BJ (cell line): ENCODE measurements at regions of chr7 and their contacts with region 1.

Region 1: DNA sequence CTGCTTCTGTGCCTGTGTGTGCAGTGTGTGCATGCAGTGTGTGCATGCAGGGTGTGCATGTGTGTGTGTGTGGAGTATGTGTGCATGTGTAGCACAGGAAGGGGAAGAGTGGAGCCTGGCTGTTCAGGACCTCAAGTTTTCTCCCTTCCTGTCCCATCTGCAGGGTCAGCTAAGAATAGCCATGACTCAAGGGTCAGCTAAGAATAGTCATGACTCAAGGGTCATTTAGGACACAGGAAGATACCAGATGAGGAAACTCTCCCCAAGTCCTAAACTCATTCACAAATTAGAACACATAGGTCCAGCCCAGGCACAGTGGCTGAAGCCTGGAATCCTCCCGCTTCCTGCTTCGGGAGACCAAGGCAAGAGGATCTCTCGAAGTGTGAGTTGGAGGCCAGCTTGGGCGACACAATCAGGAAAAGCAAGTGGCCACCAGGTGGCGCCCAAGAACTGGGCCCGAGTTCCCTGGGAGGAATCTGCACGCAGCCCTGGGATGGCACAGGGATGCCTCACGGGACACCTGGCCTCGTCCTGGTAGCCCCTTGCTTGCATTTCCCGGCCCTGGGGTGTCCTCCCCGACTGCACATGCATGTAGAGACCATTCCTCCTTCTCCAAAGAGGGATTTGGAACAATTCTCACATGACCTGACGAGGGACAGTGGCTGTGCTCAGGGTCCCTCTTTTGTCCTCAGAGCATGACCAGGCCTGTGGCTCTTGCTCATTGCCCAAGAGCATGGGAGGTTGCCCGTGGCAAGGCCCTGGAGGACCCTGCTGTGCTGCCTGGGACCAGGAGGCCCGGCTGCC is 21.4 kb upstream of the VOPP1 start:
- DNase-seq: no peak
- H3K4me3 ChIP-seq: no peak overlapping the region
- H3K27me3 ChIP-seq: peaks cover 2% of the 10 kb centered on the region; the same call in 1 of the 2 replicates
- CTCF ChIP-seq: peak; percentile 83

Region 2: DNA sequence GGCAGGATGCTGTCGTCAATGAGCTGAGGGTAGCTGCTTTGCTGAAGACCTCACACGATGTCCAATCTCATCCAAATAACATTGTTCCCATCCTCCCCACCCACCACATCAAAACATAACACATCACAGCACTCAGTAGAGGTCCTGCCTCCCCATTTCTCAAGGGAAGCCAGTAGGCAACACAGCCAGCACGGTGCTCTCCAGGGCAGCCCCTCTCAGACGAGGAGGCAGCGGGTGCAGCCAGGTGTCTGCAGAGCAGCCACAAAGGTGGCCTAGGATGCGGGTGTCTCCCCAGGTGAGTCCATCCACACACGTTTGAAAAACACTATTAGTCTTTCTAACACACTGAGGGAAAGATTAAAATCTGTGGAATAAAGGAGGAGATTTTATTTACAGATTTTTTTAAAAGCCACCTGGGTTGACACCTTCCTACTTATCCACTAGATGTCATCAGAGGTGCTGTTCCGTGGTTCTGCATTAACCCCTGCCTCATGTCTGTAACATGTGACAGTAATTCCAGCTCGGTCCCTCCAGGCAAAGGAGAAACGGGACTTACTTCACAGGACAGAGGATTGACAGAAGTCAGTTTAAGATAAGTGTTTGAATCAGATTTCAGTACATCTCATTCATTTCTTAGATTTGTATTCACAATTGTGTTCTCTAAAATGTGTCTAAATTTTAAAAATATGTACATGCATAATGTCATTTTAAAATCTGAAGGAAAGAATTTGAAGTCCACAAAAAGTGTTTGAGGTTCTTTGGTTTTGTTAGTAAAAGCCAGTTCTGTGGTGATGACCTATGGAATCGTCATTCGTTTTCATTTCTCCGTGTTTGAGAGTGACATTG is 160.6 kb before region 1 on chr7:
- CTCF ChIA-PET with region 1: interaction called, 16 read pairs
- POLR2A ChIA-PET with region 1: no interaction called
- DNase-seq: no peak
- H3K4me3 ChIP-seq: no peak overlapping the region
- H3K27me3 ChIP-seq: no peaks in the 10 kb centered on the region
- CTCF ChIP-seq: peak; percentile 58

Region 3: DNA sequence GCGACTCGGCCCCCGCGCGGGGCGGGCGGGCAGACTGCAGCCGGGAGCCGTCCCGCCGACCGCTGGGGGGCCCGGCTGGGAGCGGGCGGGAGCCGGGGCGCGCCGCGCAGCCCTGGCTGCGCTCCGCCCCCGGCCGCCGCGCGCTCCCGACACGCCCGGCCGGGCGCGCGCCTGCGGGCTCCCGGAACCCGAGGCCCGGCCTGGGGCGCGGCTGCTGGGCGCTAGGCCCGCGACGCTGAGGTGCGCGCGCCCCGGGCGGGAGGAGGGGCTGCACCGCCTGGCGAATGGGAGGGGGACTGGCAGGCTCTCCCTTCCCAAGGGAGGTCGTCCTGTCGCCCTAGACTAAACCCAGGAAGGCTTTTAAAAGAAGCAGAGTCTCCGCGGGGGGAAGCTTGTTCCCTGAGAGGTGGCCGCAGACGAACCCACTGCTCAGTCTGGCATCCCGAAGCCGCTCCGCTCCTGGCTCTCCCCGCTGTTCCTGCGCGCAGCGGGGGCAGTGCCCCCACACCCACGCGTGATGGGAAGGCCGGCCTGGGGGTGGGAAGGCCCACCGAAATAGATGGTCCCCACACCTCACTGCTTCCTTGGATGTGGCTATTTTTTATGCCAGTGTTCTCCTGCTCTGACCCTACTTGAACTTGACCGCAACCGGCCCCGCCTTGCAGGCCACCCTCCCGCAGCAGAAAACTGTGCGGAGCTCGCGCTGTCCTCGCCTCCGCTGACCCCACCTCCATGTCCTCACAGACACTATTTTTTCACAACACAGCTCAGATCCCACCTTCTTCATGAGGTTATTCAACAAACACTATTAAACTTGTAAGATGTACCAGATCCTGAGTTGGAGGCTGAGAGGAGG is 21.1 kb before region 1 on chr7 and contains the start of gene VOPP1:
- CTCF ChIA-PET with region 1: interaction called, 10 read pairs
- POLR2A ChIA-PET with region 1: no interaction called
- DNase-seq: no peak
- H3K4me3 ChIP-seq: peak within 1 kb of the TSS; percentile 79
- H3K27me3 ChIP-seq: no peaks in the 10 kb centered on the region
- CTCF ChIP-seq: no peak
- polyA plus RNA-seq, gene VOPP1: 81.9 and 83.7 TPM in 2 replicates

Region 4: DNA sequence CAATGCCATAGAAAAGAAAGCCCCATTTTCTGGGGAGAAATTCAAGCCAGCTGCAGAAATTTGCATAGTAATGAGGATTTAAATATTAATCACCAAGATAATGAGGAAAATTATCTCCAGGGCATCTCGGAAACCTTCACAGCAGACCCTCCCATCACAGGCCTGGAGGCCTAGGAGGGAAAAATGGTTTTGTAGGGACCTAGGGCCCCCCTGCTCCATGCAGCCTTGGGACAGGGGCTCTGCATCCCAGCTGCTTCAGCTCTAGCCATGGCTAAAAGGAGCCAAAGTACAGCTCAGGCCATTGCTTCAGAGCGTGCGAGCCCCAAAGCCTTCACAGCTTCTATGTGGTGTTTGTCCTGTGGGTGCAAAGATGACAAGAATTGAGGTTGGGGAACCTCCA is 25.2 kb after region 1 on chr7:
- CTCF ChIA-PET with region 1: no interaction called
- POLR2A ChIA-PET with region 1: no interaction called
- DNase-seq: no peak
- H3K4me3 ChIP-seq: no peak overlapping the region
- H3K27me3 ChIP-seq: no peaks in the 10 kb centered on the region
- CTCF ChIP-seq: no peak